ENCODE measurements at regions of chr7 and their contacts with region 1.

Region 1: GRCh38 chr7:66033471-66034385 is 41.9 kb upstream of the ASL start:
- DNase-seq: peak; percentile 10
- ATAC-seq: peak; percentile 87
- H3K4me3 Mint-ChIP-seq: no peak overlapping the region
- H3K27ac Mint-ChIP-seq: no peak overlapping the region
- H3K4me1 Mint-ChIP-seq: peaks cover 3% of the 10 kb centered on the region
- H3K27me3 Mint-ChIP-seq: peaks cover 2% of the 10 kb centered on the region

Region 2: GRCh38 chr7:66250711-66251110 is 217.0 kb after region 1 on chr7:
- CTCF ChIA-PET with region 1: no interaction called
- POLR2A ChIA-PET with region 1: no interaction called
- intact Hi-C with region 1: no loop called
- DNase-seq: no peak
- ATAC-seq: no peak
- H3K4me3 Mint-ChIP-seq: no peak overlapping the region
- H3K27ac Mint-ChIP-seq: no peak overlapping the region
- H3K4me1 Mint-ChIP-seq: no peaks in the 10 kb centered on the region
- H3K27me3 Mint-ChIP-seq: no peaks in the 10 kb centered on the region

Region 3: GRCh38 chr7:66413379-66414114 is 379.8 kb after region 1 on chr7:
- CTCF ChIA-PET with region 1: no interaction called
- POLR2A ChIA-PET with region 1: no interaction called
- intact Hi-C with region 1: loop called in 1 of 2 experiments (anchors 10 kb)
- DNase-seq: peak; percentile 93
- ATAC-seq: peak; percentile 89
- H3K4me3 Mint-ChIP-seq: peak overlapping the region; percentile 64
- H3K27ac Mint-ChIP-seq: no peak overlapping the region
- H3K4me1 Mint-ChIP-seq: peaks cover 7% of the 10 kb centered on the region
- H3K27me3 Mint-ChIP-seq: no peaks in the 10 kb centered on the region

Measured in activated CD4-positive, alpha-beta T cell treated with anti-CD3 and anti-CD28 coated beads for 36 hours (primary cell).